Stomach (tissue), 19 donors: ENCODE measurements at regions of chr7 and their contacts with region 1.

Region 1: GRCh38 chr7:25389489-25390106 is 161.3 kb upstream of the NPVF start:
- DNase-seq: peak in 1 of 2 donors; percentile 87
- H3K4me3 ChIP-seq: no peak overlapping the region
- H3K27ac ChIP-seq: peak overlapping the region in 1 of 5 donors; percentile 4
- H3K4me1 ChIP-seq: peaks cover 10 to 69% (median 21%) of the 10 kb centered on the region in 4 donors
- H3K27me3 ChIP-seq: no peaks in the 10 kb centered on the region
- CTCF ChIP-seq: peak in 5 of 7 experiments; percentile 27 to 77 (median 50)
- EP300 ChIP-seq: no peak
- POLR2A ChIP-seq: no peak

Region 2: GRCh38 chr7:25565949-25566348 is 176.4 kb after region 1 on chr7:
- intact Hi-C with region 1: loop called (anchors 10 kb)
- DNase-seq: peak; percentile 71 to 88
- H3K4me3 ChIP-seq: no peak overlapping the region
- H3K27ac ChIP-seq: peak overlapping the region in 2 of 5 donors; percentile 40 to 61
- H3K4me1 ChIP-seq: peaks cover 0 to 34% (median 19%) of the 10 kb centered on the region in 4 donors
- H3K27me3 ChIP-seq: no peaks in the 10 kb centered on the region
- CTCF ChIP-seq: peak in 6 of 7 experiments; percentile 86 to 100 (median 99)
- EP300 ChIP-seq: no peak
- POLR2A ChIP-seq: no peak